ENCODE measurements at regions of chr3 and their contacts with region 1.

Region 1: DNA sequence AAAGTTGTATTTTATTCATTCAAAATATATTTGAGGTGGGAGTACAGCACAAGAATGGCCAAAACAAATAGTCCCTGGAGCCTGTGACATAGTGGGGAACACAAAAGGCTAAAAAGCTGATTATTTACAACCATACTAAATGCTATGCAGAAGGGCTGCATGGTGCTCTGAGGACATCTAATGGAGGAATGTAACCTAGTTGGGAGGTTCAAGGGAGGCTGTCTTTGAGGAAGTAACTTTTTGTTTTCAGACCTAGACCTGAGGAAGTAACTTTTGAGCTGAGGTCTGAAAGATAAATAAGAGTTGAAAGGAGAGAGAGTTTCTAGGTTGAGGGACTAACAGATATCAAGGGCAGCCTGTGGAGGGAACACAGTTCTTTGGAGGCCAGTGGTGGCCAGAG is 34.8 kb upstream of the RASA2 start:
- DNase-seq: peak; percentile 47
- ATAC-seq: peak; percentile 66
- H3K4me3 ChIP-seq: no peak overlapping the region
- H3K27ac ChIP-seq: no peak overlapping the region
- H3K4me1 ChIP-seq: no peaks in the 10 kb centered on the region
- H3K27me3 ChIP-seq: no peaks in the 10 kb centered on the region
- CTCF ChIP-seq: peak; percentile 82

Region 2: DNA sequence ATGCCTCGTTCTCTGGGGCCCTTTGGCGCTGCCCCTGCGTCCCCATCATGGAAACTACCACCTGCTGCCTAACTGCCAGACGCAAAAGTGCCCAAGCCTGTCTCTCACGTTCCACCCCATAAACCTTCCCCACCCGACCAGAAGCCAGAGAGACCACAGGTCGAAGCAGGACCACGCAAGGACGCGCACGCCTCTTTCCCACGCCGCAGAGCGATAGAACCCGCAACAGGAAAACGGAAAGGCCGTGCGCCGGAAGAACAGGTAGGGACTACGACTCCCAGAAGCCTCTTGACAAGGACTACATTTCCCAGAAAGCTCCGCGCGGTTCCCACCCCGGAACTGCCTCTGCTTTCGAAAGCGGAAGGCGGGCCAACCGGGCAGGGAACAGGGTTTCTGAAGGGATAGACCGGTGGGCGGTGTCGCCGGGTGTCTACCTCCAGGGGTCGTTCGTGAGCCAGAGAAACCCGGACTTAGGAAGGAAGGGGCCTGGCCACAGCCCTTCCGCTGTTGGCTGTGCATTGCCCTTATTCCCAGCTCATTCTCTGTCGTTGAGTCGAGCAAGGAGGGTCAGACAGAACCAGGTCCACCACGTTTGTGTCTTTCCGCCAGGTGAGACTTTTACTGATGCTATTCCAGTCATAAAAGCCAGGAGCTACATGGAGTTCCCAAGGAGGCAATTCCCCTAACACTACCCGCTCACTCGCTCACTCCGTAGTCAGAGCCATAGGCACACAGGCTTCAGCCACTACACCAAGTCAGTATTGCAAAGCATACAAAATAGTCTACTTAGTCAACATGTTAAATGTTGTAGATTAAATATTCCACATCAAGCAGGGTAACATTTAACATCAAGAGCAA is 140.3 kb before region 1 on chr3:
- CTCF ChIA-PET with region 1: interaction called, 15 read pairs
- POLR2A ChIA-PET with region 1: no interaction called
- in situ Hi-C with region 1: no loop called
- intact Hi-C with region 1: loop called (anchors 2 kb)
- DNase-seq: peak; percentile 85
- ATAC-seq: peak; percentile 98
- H3K4me3 ChIP-seq: peak overlapping the region; percentile 67 to 86
- H3K27ac ChIP-seq: peak overlapping the region; percentile 93
- H3K4me1 ChIP-seq: peaks cover 8% of the 10 kb centered on the region
- H3K27me3 ChIP-seq: no peaks in the 10 kb centered on the region
- CTCF ChIP-seq: peak; percentile 91

Region 3: DNA sequence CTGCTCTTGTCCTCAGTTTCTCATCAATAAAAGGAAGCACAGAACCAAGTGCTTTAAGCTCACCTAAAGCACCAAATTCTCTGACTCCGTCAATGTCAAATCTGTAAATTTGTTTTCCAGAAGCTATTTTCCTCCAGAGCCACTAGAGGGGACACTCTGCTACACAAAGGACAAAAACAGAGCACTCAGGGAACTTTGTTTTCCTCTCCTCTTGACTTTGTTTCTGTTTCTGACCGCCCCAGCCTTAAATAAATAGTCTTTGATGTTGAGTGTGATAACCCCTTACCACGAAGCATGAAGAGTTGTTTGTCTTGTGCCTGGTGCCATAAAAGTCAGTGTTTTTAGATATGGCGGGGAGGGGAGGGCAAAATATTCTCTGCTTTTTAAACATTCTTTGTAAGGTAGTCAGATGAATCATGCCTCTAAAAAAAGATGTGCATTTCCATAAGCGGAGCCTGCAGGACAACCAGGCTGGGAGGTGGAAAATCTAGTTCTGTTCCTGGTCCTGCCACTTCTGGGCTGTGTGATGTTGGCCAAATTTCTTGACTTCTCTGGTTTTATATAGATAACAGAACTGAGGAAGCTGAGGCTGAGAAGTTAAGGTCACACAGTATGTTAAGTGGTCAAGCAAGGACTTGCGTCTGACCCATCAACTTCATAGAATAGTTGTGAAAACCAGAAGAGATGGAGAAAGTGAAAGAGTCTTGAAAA is 91.0 kb before region 1 on chr3:
- CTCF ChIA-PET with region 1: interaction called, 20 read pairs
- POLR2A ChIA-PET with region 1: no interaction called
- in situ Hi-C with region 1: no loop called
- intact Hi-C with region 1: loop called (anchors 2 kb)
- DNase-seq: peak; percentile 65
- ATAC-seq: peak; percentile 88
- H3K4me3 ChIP-seq: peak overlapping the region in 1 of 2 experiments; percentile 23; a peak in 2 of 4 replicates
- H3K27ac ChIP-seq: peak overlapping the region; percentile 19; the same call in 1 of the 2 replicates
- H3K4me1 ChIP-seq: peaks cover 10% of the 10 kb centered on the region
- H3K27me3 ChIP-seq: no peaks in the 10 kb centered on the region
- CTCF ChIP-seq: peak; percentile 91

Region 4: DNA sequence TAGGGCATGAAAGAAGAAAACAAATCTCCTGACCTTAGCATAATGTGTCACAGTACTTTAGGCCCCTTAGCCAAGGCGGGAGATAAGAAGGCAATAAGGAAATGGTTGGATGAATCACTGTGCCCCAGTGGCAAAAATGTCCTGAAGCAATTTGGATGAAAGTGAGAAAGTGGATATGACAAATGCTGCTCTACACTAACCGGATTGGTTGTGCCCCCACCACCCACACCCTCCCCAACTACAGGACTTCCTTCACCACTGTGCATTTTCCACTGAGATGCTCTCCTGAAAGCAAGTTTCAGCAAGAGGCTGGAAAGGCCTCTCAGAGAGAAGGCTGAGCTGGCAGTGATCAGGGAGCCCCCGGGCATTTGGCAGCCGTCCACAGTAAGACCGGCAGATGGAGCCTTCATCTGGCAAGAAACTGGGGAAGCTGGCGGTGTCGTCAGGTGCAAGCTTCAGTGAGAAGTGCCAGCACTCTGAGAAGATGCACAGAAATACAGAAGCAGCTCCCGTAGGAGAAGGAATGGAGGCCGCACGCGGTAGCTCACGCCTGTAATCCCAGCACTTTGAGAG is 488.3 kb after region 1 on chr3:
- CTCF ChIA-PET with region 1: no interaction called
- POLR2A ChIA-PET with region 1: no interaction called
- in situ Hi-C with region 1: no loop called
- intact Hi-C with region 1: no loop called
- DNase-seq: peak; percentile 42
- ATAC-seq: peak; percentile 91
- H3K4me3 ChIP-seq: 0 out of 4 replicates have a peak overlapping the region, but pooled peaks of 1 of the 2 experiments have one; percentile 9
- H3K27ac ChIP-seq: peak overlapping the region; percentile 80
- H3K4me1 ChIP-seq: peaks cover 31% of the 10 kb centered on the region
- H3K27me3 ChIP-seq: no peaks in the 10 kb centered on the region
- CTCF ChIP-seq: no peak